ENCODE measurements at regions of chr19 and their contacts with region 1.

Region 1: GRCh38 chr19:17135001-17135853 is 59.6 kb downstream of the MYO9B start:
- DNase-seq: peak; percentile 93
- H3K4me3 ChIP-seq: no peak overlapping the region
- H3K27ac ChIP-seq: peak overlapping the region; percentile 78 to 80
- H3K4me1 ChIP-seq: peaks cover 22% of the 10 kb centered on the region
- H3K27me3 ChIP-seq: no peaks in the 10 kb centered on the region
- CTCF ChIP-seq: peak in 1 of 3 experiments; percentile 21
- POLR2A ChIP-seq: no peak

Region 2: GRCh38 chr19:16920758-16921210 is 214.4 kb before region 1 on chr19:
- intact Hi-C with region 1: no loop called
- DNase-seq: no peak
- H3K4me3 ChIP-seq: no peak overlapping the region
- H3K27ac ChIP-seq: no peak overlapping the region
- H3K4me1 ChIP-seq: no peaks in the 10 kb centered on the region
- H3K27me3 ChIP-seq: no peaks in the 10 kb centered on the region
- CTCF ChIP-seq: no peak
- POLR2A ChIP-seq: no peak

Region 3: GRCh38 chr19:17075035-17075863 is 60.0 kb before region 1 on chr19 and contains the starts of genes HAUS8 and MYO9B:
- intact Hi-C with region 1: loop called (anchors 10 kb)
- DNase-seq: peak; percentile 99
- H3K4me3 ChIP-seq: peak within 1 kb of the TSS; percentile 78 to 86
- H3K27ac ChIP-seq: peak within 1 kb of the TSS; percentile 73 to 88
- H3K4me1 ChIP-seq: peaks cover 28% of the 10 kb centered on the region
- H3K27me3 ChIP-seq: no peaks in the 10 kb centered on the region
- CTCF ChIP-seq: peak in 1 of 3 experiments; percentile 21
- POLR2A ChIP-seq: peak; percentile 4
- total RNA-seq, gene HAUS8: 20.0 to 23.5 TPM
- total RNA-seq, gene MYO9B: 407 TPM

Measured in testis (tissue), 5 donors.